ENCODE measurements at regions of chr3 and their contacts with region 1.

Region 1: DNA sequence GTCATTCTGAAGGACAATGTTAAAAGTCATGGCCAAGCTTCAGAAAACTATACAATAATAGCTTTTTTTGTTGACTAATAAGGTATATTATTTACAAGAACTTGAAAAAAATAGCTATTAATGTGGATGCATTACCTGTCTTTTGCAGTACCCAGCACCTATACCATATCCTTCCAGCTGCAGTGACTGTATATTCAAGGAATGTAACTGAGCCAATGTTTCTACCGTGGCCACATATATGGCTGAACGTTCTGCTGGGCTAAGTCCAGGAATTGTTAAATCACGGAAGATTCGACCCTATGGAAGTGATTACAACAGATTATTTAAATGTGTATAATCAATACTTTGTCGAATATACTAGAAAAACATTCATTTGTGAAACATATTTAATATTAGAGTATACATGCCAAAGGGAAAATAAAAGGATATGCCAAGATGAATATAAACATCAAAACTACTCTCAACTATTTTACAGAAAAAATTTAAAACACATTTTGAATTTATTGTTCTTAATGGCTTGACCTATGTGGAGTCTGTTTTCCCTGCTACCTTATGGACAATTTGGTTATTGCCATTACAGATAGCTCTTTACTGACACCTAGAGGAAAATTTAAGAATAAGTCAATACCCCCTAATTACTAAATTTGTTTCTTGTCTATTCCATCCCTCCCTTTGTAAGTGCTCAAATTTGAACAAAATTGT is 17.6 kb downstream of the ACAD11 start:
- DNase-seq: no peak
- H3K4me3 ChIP-seq: no peak overlapping the region
- H3K27ac ChIP-seq: no peak overlapping the region
- H3K4me1 ChIP-seq: peaks cover 17% of the 10 kb centered on the region
- H3K27me3 ChIP-seq: no peaks in the 10 kb centered on the region
- CTCF ChIP-seq: peak; percentile 54 to 72

Region 2: DNA sequence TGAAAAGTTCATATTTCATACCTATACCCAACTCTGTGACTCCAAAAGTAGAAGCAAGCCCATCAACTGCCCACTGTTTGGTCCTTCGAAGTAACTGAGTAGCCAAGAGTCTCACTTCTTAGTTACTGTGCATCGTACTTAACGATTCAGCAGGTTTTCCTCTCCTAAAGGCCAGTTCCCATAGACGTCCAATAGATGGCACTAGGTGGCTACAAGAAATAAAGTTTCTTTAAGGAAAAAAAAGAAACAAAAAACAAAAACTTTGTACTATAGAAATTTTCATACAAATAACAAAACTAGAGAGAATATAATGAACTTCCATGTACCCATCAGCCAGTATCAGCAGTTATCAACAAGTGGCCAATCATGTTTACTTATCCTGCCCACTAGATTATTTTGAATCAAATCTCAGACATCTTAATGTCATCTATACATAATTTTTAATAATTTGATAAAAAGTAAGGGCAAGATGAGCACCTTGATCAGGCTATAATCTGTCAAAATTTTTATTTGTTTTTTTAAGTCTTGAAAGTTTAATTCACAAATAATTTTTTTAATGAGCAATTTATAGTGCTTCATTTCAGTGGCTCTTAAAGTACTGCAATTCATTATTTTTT is 388.6 kb before region 1 on chr3:
- CTCF ChIA-PET with region 1: no interaction called
- dilution Hi-C with region 1: no loop called
- in situ Hi-C with region 1: no loop called
- intact Hi-C with region 1: loop called (anchors 10 kb)
- DNase-seq: peak; percentile 47
- H3K4me3 ChIP-seq: no peak overlapping the region
- H3K27ac ChIP-seq: no peak overlapping the region
- H3K4me1 ChIP-seq: peaks cover 7% of the 10 kb centered on the region
- H3K27me3 ChIP-seq: no peaks in the 10 kb centered on the region
- CTCF ChIP-seq: peak; percentile 77 to 78

Region 3: DNA sequence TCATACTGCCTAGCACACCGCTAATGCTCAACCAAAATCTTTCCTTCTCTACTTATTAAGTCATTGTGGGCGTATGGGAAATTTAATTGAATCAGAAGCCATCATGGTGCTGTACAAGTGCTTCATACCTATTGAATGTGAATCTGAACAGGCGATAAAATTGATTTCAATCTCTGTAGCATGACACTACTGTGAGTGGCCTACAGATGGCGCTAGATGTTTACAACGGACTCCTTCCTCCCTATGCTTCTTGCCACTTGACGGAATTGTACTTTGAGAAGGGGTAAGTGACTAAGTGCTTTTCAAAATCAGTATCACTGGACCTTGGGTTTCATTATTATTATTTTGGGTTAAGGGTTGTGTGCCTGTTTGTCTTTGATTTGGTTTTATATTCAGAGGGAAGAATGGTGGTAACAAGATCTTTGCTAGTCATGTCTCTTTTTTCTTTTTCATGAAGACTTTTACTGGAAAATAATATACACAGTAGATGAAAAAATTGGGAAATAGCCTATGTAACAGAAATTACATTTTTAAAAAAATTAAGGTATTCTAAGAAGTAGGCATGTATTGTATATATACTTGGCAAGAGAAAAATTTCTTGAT is 289.3 kb before region 1 on chr3:
- CTCF ChIA-PET with region 1: no interaction called
- dilution Hi-C with region 1: no loop called
- in situ Hi-C with region 1: no loop called
- intact Hi-C with region 1: loop called (anchors 5 kb)
- DNase-seq: peak; percentile 53
- H3K4me3 ChIP-seq: no peak overlapping the region
- H3K27ac ChIP-seq: no peak overlapping the region
- H3K4me1 ChIP-seq: peaks cover 3% of the 10 kb centered on the region
- H3K27me3 ChIP-seq: no peaks in the 10 kb centered on the region
- CTCF ChIP-seq: peak; percentile 91 to 92

Region 4: GRCh38 chr3:132535575-132536441 is 106.2 kb before region 1 on chr3:
- CTCF ChIA-PET with region 1: interaction called, 8 read pairs
- dilution Hi-C with region 1: no loop called
- in situ Hi-C with region 1: loop called (anchors 5 kb)
- intact Hi-C with region 1: loop called (anchors 1 kb)
- DNase-seq: peak; percentile 50
- H3K4me3 ChIP-seq: no peak overlapping the region
- H3K27ac ChIP-seq: no peak overlapping the region
- H3K4me1 ChIP-seq: no peaks in the 10 kb centered on the region
- H3K27me3 ChIP-seq: no peaks in the 10 kb centered on the region
- CTCF ChIP-seq: peak; percentile 47 to 61

Region 5: DNA sequence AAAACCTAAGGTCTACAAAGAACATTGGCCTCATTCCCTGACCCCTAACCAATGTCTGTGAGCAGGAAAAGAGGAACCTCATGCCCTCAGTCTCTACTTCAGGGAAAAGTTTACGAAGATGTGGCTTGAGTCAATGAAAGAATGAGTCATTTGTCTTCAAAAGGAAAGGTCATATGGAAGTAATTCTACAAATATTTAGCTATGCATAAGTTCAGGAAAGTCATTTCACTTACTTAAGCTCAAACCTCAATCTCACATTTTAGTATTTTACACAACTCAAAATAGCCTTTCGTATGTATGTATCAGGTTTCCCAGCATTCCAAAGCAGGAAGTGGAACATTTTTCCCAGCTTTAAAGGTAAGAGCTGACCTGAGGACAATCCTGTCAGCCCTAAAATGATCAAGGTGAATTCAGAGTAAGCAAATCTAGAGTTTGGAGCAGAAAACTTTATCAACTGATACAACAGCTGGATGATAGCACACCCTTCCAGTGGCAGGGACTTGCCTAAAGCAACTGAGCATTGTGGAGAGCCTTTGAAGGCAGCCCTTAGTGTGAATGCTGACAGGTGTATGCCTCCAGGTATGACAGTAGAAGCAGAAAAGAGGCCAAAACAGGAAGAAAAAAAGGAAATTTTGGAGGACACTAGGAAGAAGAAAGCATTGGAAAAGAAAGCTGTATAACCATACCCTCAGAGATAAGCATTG is 98.8 kb before region 1 on chr3:
- CTCF ChIA-PET with region 1: interaction called, 13 read pairs
- dilution Hi-C with region 1: no loop called
- in situ Hi-C with region 1: loop called (anchors 5 kb)
- intact Hi-C with region 1: no loop called
- DNase-seq: peak; percentile 66
- H3K4me3 ChIP-seq: no peak overlapping the region
- H3K27ac ChIP-seq: no peak overlapping the region
- H3K4me1 ChIP-seq: peaks cover 9% of the 10 kb centered on the region
- H3K27me3 ChIP-seq: no peaks in the 10 kb centered on the region
- CTCF ChIP-seq: no peak

Region 6: GRCh38 chr3:132595014-132595413 is 47.0 kb before region 1 on chr3:
- CTCF ChIA-PET with region 1: no interaction called
- dilution Hi-C with region 1: no loop called
- in situ Hi-C with region 1: no loop called
- intact Hi-C with region 1: loop called (anchors 2 kb)
- DNase-seq: peak; percentile 57
- H3K4me3 ChIP-seq: no peak overlapping the region
- H3K27ac ChIP-seq: no peak overlapping the region
- H3K4me1 ChIP-seq: peaks cover 22% of the 10 kb centered on the region
- H3K27me3 ChIP-seq: no peaks in the 10 kb centered on the region
- CTCF ChIP-seq: no peak

Region 7: GRCh38 chr3:133023362-133023761 is 381.4 kb after region 1 on chr3:
- CTCF ChIA-PET with region 1: no interaction called
- dilution Hi-C with region 1: no loop called
- in situ Hi-C with region 1: no loop called
- intact Hi-C with region 1: no loop called
- DNase-seq: no peak
- H3K4me3 ChIP-seq: no peak overlapping the region
- H3K27ac ChIP-seq: no peak overlapping the region
- H3K4me1 ChIP-seq: no peaks in the 10 kb centered on the region
- H3K27me3 ChIP-seq: no peaks in the 10 kb centered on the region
- CTCF ChIP-seq: no peak

Measured in mammary epithelial cell (primary cell).